ENCODE measurements at regions of chr15 and their contacts with region 1.

Region 1: GRCh38 chr15:84588053-84588874 is 12.5 kb upstream of the ZSCAN2 start:
- DNase-seq: peak; percentile 83 to 91
- H3K4me3 ChIP-seq: peak overlapping the region; percentile 26
- H3K4me3 Mint-ChIP-seq: peak overlapping the region; percentile 67
- H3K27ac Mint-ChIP-seq: no peak overlapping the region
- H3K4me1 ChIP-seq: no peaks in the 10 kb centered on the region
- H3K4me1 Mint-ChIP-seq: no peaks in the 10 kb centered on the region
- H3K27me3 ChIP-seq: no peaks in the 10 kb centered on the region
- H3K27me3 Mint-ChIP-seq: peaks cover 7% of the 10 kb centered on the region
- CTCF ChIP-seq: peak; percentile 77 to 90

Region 2: DNA sequence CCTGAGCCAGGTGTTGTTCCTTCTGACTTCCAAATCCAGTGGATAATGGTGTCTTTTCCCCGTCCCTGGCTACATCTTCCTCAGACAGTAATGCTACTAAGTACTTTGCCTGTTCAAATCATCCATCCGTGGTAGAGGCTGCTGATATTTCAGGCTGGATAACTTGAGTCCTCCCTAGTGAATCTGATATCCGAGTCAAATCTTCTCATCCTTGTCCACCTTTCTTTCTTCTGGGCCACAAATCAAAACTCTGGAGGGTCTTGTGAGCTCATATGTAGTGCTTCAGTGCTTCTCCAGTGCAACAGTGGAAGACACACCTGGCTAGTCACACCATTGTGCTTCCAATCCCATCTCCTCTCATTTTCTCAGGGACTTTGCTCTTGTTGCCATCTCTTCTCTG is 1129.9 kb before region 1 on chr15:
- CTCF ChIA-PET with region 1: no interaction called
- POLR2A ChIA-PET with region 1: no interaction called
- intact Hi-C with region 1: no loop called
- DNase-seq: no peak
- H3K4me3 ChIP-seq: no peak overlapping the region
- H3K4me3 Mint-ChIP-seq: no peak overlapping the region
- H3K27ac Mint-ChIP-seq: no peak overlapping the region
- H3K4me1 ChIP-seq: peaks cover 21% of the 10 kb centered on the region
- H3K4me1 Mint-ChIP-seq: no peaks in the 10 kb centered on the region
- H3K27me3 ChIP-seq: no peaks in the 10 kb centered on the region
- H3K27me3 Mint-ChIP-seq: no peaks in the 10 kb centered on the region
- CTCF ChIP-seq: no peak

Region 3: DNA sequence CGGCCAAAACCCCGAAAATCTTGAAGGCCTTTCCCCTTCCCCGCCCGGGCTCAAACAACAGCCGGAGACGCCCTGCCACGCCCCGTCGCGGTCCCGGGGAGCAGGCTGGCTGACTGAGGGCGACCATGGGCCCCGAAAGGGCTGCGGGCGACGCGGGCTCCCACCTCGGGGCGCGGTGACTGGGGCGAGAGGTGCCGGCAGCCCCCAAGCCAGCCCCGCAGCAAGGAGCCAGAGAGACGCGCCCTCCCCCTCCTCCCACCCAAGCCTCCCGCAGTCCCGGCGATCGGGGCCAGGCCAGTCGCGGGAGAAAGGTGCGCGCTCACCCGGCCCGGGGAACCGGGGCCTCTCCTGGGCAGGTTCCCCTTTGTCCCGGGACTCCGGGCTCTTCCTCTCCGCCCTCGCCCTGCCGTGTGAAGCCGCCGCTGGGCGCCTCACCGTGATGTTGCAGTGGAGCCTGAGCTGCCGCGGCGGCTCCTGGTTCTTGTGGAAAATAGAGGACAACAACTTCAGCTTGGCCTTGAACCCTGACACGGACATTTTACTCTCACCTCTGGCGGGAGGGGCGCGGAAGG is 18.0 kb before region 1 on chr15:
- CTCF ChIA-PET with region 1: interaction called, 10 read pairs
- POLR2A ChIA-PET with region 1: no interaction called
- intact Hi-C with region 1: loop called (anchors 1 kb)
- DNase-seq: no peak
- H3K4me3 ChIP-seq: peak overlapping the region; percentile 74
- H3K4me3 Mint-ChIP-seq: peak overlapping the region; percentile 80
- H3K27ac Mint-ChIP-seq: peak overlapping the region; percentile 21
- H3K4me1 ChIP-seq: no peaks in the 10 kb centered on the region
- H3K4me1 Mint-ChIP-seq: no peaks in the 10 kb centered on the region
- H3K27me3 ChIP-seq: no peaks in the 10 kb centered on the region
- H3K27me3 Mint-ChIP-seq: no peaks in the 10 kb centered on the region
- CTCF ChIP-seq: no peak

Region 4: DNA sequence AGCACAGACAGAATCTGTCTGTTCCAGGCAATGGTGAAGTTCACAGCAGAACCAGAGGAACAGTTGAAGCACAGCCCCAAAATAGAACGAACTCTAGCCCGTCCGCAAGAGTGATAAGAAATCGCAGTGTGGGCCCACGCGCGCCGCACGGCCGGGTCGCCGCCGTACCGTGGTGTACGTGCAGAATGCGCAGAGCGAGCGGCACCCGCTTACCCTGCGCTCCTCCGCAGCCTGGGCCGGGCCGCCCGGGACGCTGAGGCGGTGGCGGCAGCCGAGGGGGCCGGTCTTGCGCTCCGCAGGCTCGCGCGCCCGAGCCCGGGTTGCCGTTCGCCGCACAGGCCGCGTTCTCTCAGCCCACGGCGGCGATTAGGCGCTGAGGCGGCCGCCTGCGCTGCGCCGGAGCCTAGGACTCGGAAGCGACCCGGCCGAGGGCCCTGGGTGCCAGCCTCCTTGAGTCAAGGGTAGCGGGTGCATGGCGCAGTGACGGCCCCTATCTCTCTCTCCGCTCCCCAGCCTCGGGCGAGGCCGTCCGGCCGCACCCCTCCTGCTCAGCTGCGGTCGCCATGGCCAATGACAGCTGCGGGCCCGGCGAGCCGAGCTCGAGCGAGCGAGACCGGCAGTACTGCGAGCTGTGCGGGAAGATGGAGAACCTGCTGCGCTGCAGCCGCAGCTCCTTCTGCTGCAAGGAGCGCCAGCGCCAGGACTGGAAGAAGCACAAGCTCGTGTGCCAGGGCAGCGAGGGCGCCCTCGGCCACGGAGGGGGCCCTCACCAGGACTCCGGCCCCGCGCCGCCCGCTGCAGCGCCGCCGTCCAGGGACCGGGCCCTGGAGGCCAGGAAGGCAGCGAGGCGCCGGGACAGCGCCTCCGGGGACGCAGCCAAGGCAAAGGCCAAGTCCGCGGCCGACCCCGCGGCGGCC is 45.3 kb after region 1 on chr15:
- CTCF ChIA-PET with region 1: interaction called, 11 read pairs
- POLR2A ChIA-PET with region 1: interaction called, 3 read pairs
- intact Hi-C with region 1: loop called (anchors 1 kb)
- DNase-seq: peak; percentile 65 to 72
- H3K4me3 ChIP-seq: peak overlapping the region; percentile 70
- H3K4me3 Mint-ChIP-seq: peak overlapping the region; percentile 91
- H3K27ac Mint-ChIP-seq: peak overlapping the region; percentile 74
- H3K4me1 ChIP-seq: 0 out of 2 replicates have a peak, but pooled peaks cover 7% of the 10 kb centered on the region
- H3K4me1 Mint-ChIP-seq: no peaks in the 10 kb centered on the region
- H3K27me3 ChIP-seq: no peaks in the 10 kb centered on the region
- H3K27me3 Mint-ChIP-seq: no peaks in the 10 kb centered on the region
- CTCF ChIP-seq: no peak

Region 5: GRCh38 chr15:84748274-84749110 is 160.2 kb after region 1 on chr15 and contains the start of gene ZNF592:
- CTCF ChIA-PET with region 1: no interaction called
- POLR2A ChIA-PET with region 1: no interaction called
- intact Hi-C with region 1: no loop called
- DNase-seq: peak; percentile 75 to 87
- H3K4me3 ChIP-seq: peak within 1 kb of the TSS; percentile 89
- H3K4me3 Mint-ChIP-seq: peak within 1 kb of the TSS; percentile 94
- H3K27ac Mint-ChIP-seq: peak within 1 kb of the TSS; percentile 97
- H3K4me1 ChIP-seq: peaks cover 39% of the 10 kb centered on the region
- H3K4me1 Mint-ChIP-seq: peaks cover 34% of the 10 kb centered on the region
- H3K27me3 ChIP-seq: no peaks in the 10 kb centered on the region
- H3K27me3 Mint-ChIP-seq: no peaks in the 10 kb centered on the region
- CTCF ChIP-seq: no peak
- total RNA-seq, gene ZNF592: 29.1 and 30.6 TPM in 2 replicates

Measured in Caco-2 (cell line).